ENCODE measurements at regions of chr12 and their contacts with region 1.

Region 1: DNA sequence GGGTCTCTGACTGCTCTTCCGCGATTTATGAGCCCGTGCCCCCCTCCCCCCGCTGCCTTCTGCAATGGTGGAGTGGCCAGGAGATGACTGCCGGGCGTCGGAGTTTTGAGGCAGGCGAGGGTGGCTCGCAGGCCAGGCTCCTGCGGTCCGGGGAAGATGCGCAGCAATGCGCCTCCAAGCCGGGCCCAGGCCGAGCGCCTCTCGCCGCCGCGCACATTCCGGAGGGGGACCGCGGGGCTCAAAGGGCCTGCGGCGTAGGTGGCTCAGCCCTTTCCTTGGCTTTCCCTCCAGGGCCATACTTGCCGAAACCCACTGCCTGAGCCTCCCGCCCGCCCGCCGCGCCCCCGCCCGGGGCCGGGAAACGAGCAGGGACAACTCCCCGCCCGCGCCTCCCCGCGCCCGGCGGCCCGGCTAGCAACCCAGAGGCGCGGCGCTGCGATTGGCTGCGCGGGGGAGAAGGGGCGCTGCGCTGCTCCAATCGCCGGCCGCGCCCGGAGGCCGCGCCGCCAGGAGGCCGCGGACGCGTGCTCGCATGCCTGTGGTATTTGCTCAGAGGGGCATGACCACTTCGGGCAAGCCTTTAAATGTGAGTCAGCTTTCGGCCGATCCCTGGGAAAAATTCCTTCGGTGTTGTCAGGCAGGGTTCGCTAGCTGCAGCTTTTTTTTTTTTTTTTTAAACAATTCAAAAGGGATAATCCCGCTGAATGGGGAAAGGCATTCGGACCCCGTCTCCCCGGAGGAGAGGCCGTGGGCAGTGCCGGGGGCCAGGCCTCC is 157.9 kb upstream of the PARP11 start:
- DNase-seq: peak; percentile 55
- ATAC-seq: peak; percentile 42
- H3K4me3 ChIP-seq: no peak overlapping the region
- H3K27ac ChIP-seq: no peak overlapping the region
- H3K4me1 ChIP-seq: peaks cover 58% of the 10 kb centered on the region
- H3K27me3 ChIP-seq: no peaks in the 10 kb centered on the region
- CTCF ChIP-seq: no peak
- EP300 ChIP-seq: no peak
- POLR2A ChIP-seq: no peak
- RAD21 ChIP-seq: no peak

Region 2: GRCh38 chr12:3951380-3952135 is 79.6 kb before region 1 on chr12:
- CTCF ChIA-PET with region 1: no interaction called
- POLR2A ChIA-PET with region 1: no interaction called
- in situ Hi-C with region 1: no loop called
- intact Hi-C with region 1: loop called (anchors 2 kb)
- DNase-seq: no peak
- ATAC-seq: no peak; the same call in 2 of the 3 replicates
- H3K4me3 ChIP-seq: no peak overlapping the region
- H3K27ac ChIP-seq: no peak overlapping the region
- H3K4me1 ChIP-seq: peaks cover 9% of the 10 kb centered on the region
- H3K27me3 ChIP-seq: peaks cover 2 to 18% of the 10 kb centered on the region in 2 experiments; a peak in 4 of 5 replicates
- CTCF ChIP-seq: no peak
- EP300 ChIP-seq: no peak
- POLR2A ChIP-seq: no peak
- RAD21 ChIP-seq: no peak

Region 3: GRCh38 chr12:4282892-4283511 is 251.9 kb after region 1 on chr12:
- CTCF ChIA-PET with region 1: no interaction called
- POLR2A ChIA-PET with region 1: no interaction called
- in situ Hi-C with region 1: no loop called
- intact Hi-C with region 1: no loop called
- DNase-seq: no peak
- ATAC-seq: no peak
- H3K4me3 ChIP-seq: no peak overlapping the region
- H3K27ac ChIP-seq: no peak overlapping the region
- H3K4me1 ChIP-seq: peaks cover 8% of the 10 kb centered on the region; the same call in 1 of the 2 replicates
- H3K27me3 ChIP-seq: peaks cover 6 to 53% of the 10 kb centered on the region in 2 experiments; a peak in 4 of 5 replicates
- CTCF ChIP-seq: 0 out of 2 replicates have a peak, but pooled peaks have one; percentile 1
- EP300 ChIP-seq: no peak
- POLR2A ChIP-seq: no peak
- RAD21 ChIP-seq: no peak